HEK293T (cell line): ENCODE measurements at regions of chr6 and their contacts with region 1.

Region 1: GRCh38 chr6:27809939-27810767 is 102.0 kb downstream of the OR2B2 start:
- DNase-seq: peak; percentile 76

Region 2: GRCh38 chr6:26025894-26026832 is 1784.0 kb before region 1 on chr6:
- CTCF ChIA-PET with region 1: no interaction called
- POLR2A ChIA-PET with region 1: interaction called, 15 read pairs
- DNase-seq: peak; percentile 55

Region 3: GRCh38 chr6:27795697-27796494 is 14.3 kb before region 1 on chr6:
- CTCF ChIA-PET with region 1: interaction called, 5 read pairs
- POLR2A ChIA-PET with region 1: interaction called, 15 read pairs
- DNase-seq: peak; percentile 69

Region 4: DNA sequence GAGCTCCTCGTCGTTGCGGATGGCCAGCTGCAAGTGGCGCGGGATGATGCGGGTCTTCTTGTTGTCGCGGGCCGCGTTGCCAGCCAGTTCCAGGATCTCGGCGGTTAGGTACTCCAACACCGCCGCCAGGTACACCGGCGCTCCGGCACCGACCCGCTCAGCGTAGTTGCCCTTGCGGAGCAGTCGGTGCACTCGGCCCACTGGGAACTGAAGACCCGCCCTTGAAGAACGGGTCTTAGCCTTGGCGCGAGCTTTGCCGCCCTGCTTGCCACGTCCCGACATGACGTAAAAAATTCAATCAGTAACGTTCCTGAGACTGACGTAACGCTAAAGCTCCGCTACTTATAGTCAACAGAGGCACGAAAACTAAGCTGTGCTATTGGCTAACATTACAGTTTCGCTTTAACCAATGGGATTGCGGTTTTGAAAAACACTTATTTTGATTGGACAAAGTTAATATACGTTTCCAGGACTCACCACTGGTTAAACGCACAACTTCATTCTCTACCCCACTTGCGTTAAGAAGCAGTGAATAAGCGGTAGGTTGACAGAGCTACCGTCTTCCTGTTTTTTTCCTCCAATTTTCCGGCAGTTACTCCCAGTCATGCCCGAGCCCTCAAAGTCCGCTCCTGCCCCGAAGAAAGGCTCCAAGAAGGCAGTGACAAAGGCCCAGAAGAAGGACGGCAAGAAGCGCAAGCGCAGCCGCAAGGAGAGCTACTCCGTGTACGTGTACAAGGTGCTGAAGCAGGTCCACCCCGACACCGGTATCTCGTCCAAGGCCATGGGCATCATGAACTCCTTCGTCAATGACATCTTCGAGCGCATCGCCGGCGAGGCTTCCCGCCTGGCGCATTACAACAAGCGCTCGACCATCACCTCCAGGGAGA is 28.1 kb after region 1 on chr6:
- CTCF ChIA-PET with region 1: interaction called, 4 read pairs
- POLR2A ChIA-PET with region 1: interaction called, 239 read pairs
- DNase-seq: peak; percentile 79

Region 5: GRCh38 chr6:27871924-27872638 is 61.9 kb after region 1 on chr6:
- CTCF ChIA-PET with region 1: no interaction called
- POLR2A ChIA-PET with region 1: interaction called, 33 read pairs
- DNase-seq: no peak